ENCODE measurements at regions of chr16 and their contacts with region 1.

Region 1: DNA sequence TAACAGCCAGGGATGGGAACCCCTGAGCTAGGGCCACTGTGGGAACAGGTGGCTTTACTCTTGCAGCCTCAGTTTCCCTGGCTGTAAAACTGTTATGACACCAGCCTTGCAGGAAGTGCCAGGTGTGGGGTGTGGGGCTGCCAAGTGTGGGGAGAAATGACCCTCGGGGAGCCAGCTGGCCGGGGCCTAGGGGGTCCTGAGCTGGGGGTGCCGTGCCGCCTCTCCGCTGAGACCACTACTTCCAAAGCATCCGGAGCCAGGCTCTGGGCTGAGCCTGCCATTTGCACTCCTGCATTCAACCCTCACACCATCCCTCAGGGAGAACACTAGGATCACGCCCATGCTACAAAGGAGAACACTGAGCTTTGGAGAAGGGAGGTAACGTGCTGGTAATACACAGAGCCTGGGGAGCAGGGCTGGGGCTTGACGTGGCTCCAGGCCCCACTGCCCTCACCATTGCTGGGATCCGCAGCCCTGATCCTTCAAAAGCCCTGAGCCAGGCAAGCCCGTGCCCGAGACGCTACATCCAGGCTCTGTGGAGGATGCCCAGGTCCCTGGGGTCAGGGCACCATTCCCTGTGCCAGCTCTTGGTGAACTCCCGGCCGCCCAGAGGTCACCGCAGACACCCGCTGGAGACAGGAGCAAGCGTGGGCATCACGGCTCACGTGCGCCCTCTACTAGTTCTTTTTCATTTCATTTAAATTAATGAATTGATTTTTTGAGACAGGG is 28.8 kb upstream of the GINS2 start:
- DNase-seq: peak; percentile 87
- ATAC-seq: peak; percentile 71

Region 2: DNA sequence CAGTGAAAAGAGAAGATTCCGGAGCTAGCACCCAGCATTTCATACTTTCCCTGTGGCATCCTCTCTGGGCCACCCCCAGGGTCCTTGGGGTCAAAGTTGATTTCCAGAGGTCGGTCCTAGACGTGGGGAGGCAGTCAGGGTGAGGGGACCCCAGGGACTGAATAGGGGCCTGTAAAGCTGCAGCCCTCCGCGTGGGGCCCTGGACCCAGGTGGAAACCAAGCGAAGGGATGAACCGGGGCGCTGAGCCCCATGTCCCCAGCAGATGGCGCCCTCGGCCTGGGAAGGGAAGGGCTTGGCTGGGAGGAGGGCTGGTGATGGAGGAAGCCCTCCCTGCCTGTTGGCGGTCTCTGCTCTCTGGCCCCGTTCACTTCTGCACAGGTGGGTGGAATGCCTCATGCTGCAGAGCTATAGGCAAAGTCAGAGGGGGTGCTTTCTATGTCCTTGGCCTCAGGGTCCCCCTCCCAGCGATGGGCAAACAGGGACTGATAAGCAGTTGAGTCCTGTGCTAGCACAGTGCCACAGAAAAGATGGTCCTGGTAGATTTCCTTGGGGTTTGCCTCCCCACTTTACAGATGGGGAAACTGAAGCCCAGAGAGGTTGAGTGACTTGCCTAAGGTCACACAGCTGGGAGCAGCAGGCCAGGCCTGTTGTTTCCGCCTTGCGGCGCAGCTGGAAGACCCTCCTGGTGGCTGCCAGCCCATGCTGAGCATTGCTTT is 441.9 kb before region 1 on chr16:
- intact Hi-C with region 1: loop called (anchors 5 kb)
- DNase-seq: peak; percentile 89
- ATAC-seq: peak; percentile 66

Region 3: DNA sequence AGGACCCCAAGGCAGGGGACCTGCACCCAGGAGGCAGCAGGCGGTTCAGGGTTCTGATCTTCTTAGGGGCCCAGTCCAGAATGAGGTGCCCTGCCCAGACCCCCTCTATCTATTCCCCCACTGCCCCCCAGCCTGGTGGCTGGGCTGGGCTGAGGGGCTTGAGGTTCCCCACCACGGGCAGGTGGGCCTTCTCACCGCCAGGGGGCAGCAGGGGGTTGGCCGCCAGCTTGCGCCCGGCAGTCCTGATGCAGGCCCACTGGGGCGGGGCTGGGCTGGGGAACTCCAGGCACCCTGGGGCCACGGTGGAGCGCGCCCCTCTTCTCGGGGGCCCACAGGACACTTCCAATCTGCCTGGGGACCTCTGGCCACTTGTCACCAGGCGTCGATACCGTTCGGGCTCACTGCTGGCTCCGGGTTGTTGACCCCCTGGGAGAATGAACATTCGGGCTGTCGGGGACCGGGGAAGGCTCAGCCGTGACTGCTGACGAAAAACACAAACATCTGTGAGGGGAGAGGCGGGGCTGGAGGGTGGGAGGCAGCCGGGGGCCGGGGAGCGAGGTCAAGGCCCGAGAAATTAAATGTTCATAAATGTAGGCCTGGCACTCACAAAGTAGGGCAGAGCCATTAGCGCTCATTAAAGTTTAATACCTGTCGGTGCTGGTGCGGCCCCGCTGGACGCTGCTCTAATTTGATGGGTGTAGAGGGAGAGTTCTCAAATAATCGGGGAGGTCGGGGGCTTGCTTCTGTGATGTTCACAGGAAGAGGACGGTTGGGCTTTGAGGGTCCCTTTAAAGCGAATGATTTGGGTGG is 323.7 kb before region 1 on chr16:
- intact Hi-C with region 1: loop called (anchors 10 kb)
- DNase-seq: peak; percentile 75
- ATAC-seq: peak; percentile 53

Region 4: GRCh38 chr16:85615852-85616606 is 101.5 kb before region 1 on chr16:
- intact Hi-C with region 1: loop called (anchors 5 kb)
- DNase-seq: peak; percentile 91
- ATAC-seq: peak; percentile 5

Region 5: DNA sequence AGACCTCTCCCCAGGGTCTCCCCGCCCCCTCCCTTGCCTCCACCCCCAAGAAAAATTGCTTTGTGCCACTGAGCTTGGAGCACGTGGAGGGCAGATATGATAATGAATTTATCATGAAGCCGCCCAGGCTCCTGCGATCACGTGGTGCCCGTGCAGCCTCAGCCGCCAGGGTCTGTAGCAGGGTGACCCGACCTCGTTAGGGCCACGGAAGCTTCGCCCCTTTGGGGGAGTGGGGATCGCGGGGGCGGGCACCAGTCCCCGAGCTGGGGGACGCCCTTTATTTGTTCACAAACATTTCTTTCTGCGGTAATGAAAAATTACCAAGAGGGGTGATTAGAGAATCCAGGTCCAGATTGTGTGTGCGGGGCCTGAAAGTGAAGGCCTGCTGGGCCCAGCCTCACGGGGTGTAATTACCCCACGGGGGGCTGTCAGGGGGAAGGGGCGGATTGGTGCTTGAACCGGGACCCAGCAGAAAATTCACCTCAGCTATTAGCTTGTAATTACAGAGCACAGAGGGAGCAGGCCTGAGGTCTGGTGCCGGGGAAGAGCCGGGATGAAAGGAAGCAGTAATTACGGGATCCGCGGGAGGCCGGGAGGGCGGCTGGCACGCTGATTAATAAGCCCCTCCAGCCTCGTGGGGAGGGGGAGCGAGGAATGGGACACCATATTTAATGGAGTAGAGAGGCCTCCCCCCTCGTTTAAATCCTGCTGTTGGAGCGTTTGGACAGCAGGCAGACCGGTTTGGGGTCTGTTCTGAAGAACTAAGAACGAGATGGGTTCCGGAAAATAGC is 91.2 kb before region 1 on chr16:
- intact Hi-C with region 1: no loop called
- DNase-seq: no peak
- ATAC-seq: peak; percentile 23

Region 6: DNA sequence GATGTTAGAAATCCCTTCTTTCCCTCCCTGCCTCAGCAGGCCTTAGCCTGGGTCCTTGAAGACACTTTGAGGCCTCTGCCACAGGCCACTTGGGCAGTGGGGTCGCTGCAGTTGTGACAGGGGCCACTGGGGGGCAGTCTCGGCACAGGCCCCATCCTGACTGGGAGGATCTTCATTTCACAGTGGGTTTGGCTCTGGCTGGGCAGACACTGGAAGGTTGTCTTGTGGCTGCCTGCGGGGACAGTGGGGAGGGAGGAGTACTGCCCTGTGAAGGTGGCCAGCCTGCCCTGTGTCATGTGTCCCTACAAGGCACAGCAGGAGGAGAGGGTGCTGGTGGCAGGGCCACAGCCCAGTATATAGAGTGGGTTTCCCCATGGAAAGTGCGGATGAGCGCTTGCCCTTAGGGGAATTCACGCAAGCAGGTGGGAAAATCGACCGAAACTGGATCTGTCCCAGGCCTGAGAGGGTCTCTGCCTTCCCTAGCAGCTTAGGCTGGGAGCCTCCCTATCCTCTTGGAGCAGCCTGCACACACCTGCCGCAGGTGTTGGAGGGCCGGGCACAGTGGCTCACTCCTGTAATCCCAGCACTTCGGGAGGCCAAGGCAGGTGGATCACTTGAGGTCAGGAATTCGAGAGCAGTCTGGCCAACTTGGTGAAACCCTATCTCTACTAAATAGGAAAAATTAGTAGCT is 57.6 kb before region 1 on chr16:
- intact Hi-C with region 1: loop called (anchors 1 kb)
- DNase-seq: peak; percentile 76
- ATAC-seq: peak; percentile 91

Region 7: DNA sequence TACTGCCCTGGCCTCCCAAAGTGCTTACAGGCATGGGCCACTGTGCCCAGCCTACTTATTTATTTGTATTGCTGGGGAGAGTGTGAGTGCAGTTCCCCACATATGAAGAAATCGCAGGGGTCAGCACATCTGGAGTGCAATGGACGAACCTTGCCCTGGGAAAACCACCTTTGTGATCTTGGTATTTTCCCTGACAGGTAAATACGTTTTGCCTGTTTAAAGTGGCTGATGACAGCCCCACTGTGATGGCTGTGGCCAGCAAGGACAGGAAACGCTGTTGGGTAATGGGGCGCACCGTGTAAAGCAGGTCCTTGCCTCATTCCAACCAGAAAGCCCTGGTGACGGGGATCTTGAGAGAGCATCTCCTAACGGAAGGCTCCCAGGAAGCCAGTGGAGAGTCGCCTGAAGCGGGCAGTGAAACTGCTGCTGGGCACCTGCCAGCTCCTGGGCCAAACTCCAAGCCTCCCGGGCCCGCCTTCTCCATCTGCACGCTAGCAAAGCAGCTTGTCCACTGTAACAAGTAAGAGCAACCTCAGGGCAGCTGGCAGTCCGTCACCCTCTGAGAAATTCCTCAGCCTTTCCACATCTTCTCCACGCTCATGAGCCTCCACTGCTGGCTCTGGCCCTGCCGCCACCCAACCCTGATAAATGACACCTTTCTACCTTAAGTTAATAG is 64.3 kb after region 1 on chr16:
- intact Hi-C with region 1: no loop called
- DNase-seq: peak; percentile 74
- ATAC-seq: peak; percentile 64

Region 8: GRCh38 chr16:85821441-85822135 is 104.0 kb after region 1 on chr16:
- intact Hi-C with region 1: no loop called
- DNase-seq: peak; percentile 92
- ATAC-seq: peak; percentile 86

Measured in Right ventricle myocardium inferior (tissue), 1 donor.